Posterior vena cava (tissue), 2 donors: ENCODE measurements at regions of chr18 and their contacts with region 1.

Region 1: DNA sequence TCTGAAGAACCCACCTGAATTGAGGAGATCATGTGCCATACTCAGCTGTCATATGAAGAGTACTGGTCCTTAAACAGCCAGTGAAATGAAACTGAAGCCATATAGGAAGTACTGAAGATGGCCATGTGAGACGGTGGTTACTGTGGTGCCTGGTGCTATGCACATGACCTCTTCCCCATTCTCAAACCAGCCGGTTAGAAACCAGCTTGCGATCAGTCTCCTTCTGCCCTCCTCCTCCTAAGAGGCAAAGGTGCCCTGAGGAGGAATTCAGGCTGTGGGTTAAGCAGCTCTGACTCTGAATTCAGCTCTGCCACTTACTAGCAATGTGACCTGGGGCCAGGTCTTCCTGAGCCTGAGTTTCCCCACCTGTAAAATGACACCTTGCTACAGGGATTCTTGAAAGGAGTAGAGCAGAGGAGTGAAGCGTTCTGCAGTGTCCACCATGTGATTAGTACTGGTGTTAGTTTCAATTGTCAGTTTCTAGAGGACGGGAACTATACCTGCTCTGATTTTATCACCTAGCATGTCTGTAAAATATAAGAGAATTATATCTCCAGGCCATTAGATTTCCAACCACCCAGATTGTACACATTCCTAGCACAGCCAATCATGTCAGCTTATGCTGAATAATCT is 5.1 kb downstream of the FECH start:
- DNase-seq: no peak

Region 2: GRCh38 chr18:56890632-56891031 is 690.8 kb before region 1 on chr18:
- intact Hi-C with region 1: loop called in 1 of 2 experiments (anchors 10 kb)
- DNase-seq: no peak

Region 3: DNA sequence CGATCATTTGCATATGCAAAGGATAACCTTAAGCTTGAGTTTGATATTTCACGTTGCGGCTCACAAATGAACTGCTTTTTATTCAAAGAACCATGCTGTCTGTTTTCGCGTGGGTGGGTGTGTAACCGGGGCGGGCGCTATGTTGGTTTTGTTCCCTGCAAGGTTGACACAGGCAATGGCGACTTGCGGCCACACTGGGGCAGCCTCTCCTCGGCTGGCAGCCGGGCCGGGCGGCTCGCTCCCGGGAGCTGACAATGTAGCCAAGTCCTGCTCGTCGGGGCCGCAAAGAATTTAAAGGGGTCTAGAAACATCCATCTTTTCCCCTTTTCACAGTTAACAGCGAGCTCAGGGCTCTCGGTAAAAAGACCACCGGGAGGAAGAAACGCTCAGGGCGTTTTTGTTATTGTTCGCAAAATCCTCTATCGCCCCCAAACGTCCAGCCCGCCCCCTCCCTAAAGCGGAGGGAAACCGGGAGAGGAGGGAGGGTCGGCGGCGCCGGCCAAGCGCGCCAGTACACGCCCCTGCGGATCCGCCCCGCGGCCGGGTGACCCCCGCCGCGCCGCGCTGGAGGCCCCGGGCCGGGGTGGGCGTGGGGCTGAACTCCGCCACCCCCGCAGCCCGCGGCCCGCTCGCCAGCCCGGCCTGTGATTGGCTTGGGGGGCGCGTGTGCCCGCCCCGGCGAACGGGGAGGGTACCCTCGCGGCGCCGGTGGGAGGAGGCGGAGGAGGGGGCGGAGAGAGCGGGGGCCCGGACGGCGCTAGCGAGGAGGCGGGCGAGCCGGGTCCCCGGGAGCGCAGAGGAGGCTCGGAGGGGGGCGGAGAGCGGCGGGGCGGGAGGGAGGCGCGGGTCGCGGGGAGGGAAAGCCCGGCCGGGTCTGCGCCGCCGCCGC is 462.3 kb after region 1 on chr18 and contains the start of gene NEDD4L:
- intact Hi-C with region 1: loop called in 1 of 2 experiments (anchors 5 kb)
- DNase-seq: peak; percentile 94
- total RNA-seq, gene NEDD4L: 11.3 to 14.9 TPM